Calu3 (cell line): ENCODE measurements at regions of chr5 and their contacts with region 1.

Region 1: DNA sequence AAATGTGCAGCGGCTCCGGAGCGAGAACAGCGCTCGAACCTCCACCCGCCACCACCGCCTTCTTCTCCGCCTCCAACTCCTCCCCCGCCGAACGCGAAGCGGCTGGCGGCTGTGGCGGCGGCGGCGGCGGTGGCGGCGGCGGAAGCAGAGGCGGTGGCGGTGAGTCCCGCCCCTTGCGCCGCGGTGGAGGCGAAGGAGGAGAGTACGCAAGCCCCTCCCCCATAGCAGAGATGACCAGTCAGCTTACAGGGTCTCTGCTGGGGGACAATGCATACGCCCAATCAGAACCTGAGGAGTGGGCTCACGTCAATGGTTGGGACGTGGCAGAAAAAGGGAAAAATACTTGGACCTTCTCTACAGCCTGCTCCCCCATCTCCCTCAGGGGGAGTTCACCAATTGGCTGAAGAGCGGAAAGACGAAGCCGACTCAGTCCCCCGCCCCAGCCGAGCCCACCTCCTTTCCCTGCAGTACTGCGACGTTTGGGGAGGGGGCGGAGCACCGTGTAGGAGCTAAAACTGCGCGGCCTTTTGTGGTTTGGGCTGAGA is at the start of gene PJA2:
- DNase-seq: peak; percentile 99
- H3K4me3 Mint-ChIP-seq: peak within 1 kb of the TSS; percentile 99
- H3K27ac Mint-ChIP-seq: peak within 1 kb of the TSS; percentile 97
- H3K4me1 Mint-ChIP-seq: peaks cover 32% of the 10 kb centered on the region
- H3K27me3 Mint-ChIP-seq: no peaks in the 10 kb centered on the region
- CTCF ChIP-seq: peak; percentile 34
- total RNA-seq, gene PJA2: 81.0 and 89.0 TPM in 2 replicates

Region 2: GRCh38 chr5:109053995-109054417 is 355.9 kb before region 1 on chr5:
- CTCF ChIA-PET with region 1: no interaction called
- intact Hi-C with region 1: no loop called
- DNase-seq: no peak
- H3K4me3 Mint-ChIP-seq: no peak overlapping the region
- H3K27ac Mint-ChIP-seq: no peak overlapping the region
- H3K4me1 Mint-ChIP-seq: no peaks in the 10 kb centered on the region
- H3K27me3 Mint-ChIP-seq: no peaks in the 10 kb centered on the region
- CTCF ChIP-seq: no peak

Region 3: DNA sequence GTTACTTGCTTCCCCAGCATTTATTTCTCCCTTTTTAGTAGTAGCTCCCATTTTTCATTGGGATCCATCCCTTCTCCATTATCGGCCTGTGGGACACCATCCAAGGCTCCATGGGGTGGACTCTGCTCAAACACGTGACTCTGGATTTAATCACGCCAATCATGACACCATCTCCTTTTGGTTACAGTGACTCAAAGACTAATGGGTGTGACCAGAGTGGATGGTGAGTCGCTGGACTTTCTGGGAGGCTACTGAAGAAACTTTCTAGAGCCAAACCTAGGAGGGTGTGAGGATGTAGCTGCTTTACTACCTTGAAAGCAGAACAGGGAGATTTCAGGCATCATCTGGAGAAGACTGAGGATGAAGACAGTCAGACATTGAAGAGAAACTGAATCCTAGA is 93.3 kb before region 1 on chr5:
- CTCF ChIA-PET with region 1: no interaction called
- intact Hi-C with region 1: loop called (anchors 1 kb)
- DNase-seq: no peak
- H3K4me3 Mint-ChIP-seq: no peak overlapping the region
- H3K27ac Mint-ChIP-seq: peak overlapping the region; percentile 25
- H3K4me1 Mint-ChIP-seq: peaks cover 27% of the 10 kb centered on the region
- H3K27me3 Mint-ChIP-seq: no peaks in the 10 kb centered on the region
- CTCF ChIP-seq: no peak

Region 4: DNA sequence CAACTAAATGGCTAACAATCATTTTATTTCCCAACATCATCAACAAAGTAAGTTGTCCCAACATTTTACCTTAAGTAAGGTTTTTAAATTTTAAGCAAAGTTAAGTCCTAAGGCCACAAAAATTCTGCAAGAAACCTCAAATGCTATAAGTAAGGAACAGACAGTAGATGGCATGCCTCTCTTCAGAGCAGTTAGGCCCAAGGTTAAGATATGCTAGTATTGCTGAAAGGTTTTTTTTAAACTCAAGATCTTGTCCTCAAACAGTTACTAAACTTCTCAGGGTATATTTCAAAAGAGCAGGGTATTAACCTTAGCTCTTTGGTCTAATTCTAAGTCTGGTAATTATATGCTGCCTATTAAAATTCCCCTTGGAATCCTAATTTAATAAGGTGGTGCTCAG is 35.3 kb before region 1 on chr5:
- CTCF ChIA-PET with region 1: no interaction called
- intact Hi-C with region 1: loop called (anchors 5 kb)
- DNase-seq: no peak
- H3K4me3 Mint-ChIP-seq: no peak overlapping the region
- H3K27ac Mint-ChIP-seq: no peak overlapping the region
- H3K4me1 Mint-ChIP-seq: peaks cover 8% of the 10 kb centered on the region
- H3K27me3 Mint-ChIP-seq: no peaks in the 10 kb centered on the region
- CTCF ChIP-seq: no peak

Region 5: GRCh38 chr5:109388407-109388806 is 21.5 kb before region 1 on chr5:
- CTCF ChIA-PET with region 1: no interaction called
- intact Hi-C with region 1: loop called (anchors 2 kb)
- DNase-seq: no peak
- H3K4me3 Mint-ChIP-seq: no peak overlapping the region
- H3K27ac Mint-ChIP-seq: peak overlapping the region; percentile 15
- H3K4me1 Mint-ChIP-seq: peaks cover 69% of the 10 kb centered on the region
- H3K27me3 Mint-ChIP-seq: no peaks in the 10 kb centered on the region
- CTCF ChIP-seq: no peak